ENCODE measurements at regions of chr13 and their contacts with region 1.

Region 1: GRCh38 chr13:41905600-41906254 is 55.2 kb downstream of the VWA8 start:
- DNase-seq: no peak
- H3K4me3 Mint-ChIP-seq: no peak overlapping the region
- H3K27ac Mint-ChIP-seq: no peak overlapping the region
- H3K4me1 Mint-ChIP-seq: peaks cover 14% of the 10 kb centered on the region
- H3K27me3 Mint-ChIP-seq: no peaks in the 10 kb centered on the region

Region 2: GRCh38 chr13:41960639-41961465 is 55.1 kb after region 1 on chr13 and contains the start of gene VWA8:
- intact Hi-C with region 1: loop called (anchors 2 kb)
- DNase-seq: peak; percentile 81
- H3K4me3 Mint-ChIP-seq: peak within 1 kb of the TSS; percentile 95
- H3K27ac Mint-ChIP-seq: peak within 1 kb of the TSS; percentile 91
- H3K4me1 Mint-ChIP-seq: peaks cover 45% of the 10 kb centered on the region
- H3K27me3 Mint-ChIP-seq: peaks cover 3% of the 10 kb centered on the region
- total RNA-seq, gene VWA8: 26.4 and 26.6 TPM in 2 replicates

Region 3: DNA sequence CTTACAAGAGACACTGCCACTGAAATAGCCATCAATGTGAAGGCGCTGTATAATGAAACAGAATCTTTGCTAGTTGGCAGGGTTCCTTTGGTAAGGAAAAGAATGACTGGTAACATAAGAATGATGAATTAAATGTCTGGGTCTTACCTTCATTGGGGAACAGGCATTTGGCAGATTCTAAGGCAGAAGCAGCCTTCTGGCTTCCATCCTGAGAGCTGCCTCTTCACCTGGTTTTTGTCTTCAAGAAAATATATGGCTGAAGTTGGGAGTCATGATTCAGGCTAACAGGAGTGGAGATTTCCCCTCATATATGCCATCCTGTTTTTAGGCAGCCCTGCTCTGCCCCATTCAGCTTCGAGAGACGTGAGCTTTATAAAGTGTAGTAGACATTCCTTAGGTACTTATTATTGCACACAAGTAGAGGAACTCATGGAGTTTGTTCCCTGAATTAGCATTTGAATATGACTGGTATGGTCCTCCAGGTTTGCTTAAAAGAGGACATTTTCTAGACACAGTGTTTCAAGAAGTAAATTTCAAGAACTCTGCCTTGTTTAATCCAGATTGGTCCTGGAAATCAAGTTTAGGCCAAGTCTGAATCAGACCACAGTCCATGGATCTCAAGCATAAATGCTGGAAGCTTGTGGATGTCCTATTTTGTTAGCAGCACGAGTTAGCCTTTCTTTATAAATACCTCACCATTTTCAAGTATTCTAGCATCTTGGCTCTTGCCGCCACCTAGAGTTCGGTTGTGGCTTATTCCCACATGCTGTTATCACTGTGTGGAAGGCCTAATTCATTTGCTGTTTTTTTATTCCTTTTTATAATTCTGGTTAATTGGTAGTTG is 310.1 kb after region 1 on chr13:
- intact Hi-C with region 1: loop called (anchors 5 kb)
- DNase-seq: peak; percentile 3
- H3K4me3 Mint-ChIP-seq: no peak overlapping the region
- H3K27ac Mint-ChIP-seq: no peak overlapping the region
- H3K4me1 Mint-ChIP-seq: no peaks in the 10 kb centered on the region
- H3K27me3 Mint-ChIP-seq: no peaks in the 10 kb centered on the region